Kidney (tissue), 22 donors: ENCODE measurements at regions of chr17 and their contacts with region 1.

Region 1: DNA sequence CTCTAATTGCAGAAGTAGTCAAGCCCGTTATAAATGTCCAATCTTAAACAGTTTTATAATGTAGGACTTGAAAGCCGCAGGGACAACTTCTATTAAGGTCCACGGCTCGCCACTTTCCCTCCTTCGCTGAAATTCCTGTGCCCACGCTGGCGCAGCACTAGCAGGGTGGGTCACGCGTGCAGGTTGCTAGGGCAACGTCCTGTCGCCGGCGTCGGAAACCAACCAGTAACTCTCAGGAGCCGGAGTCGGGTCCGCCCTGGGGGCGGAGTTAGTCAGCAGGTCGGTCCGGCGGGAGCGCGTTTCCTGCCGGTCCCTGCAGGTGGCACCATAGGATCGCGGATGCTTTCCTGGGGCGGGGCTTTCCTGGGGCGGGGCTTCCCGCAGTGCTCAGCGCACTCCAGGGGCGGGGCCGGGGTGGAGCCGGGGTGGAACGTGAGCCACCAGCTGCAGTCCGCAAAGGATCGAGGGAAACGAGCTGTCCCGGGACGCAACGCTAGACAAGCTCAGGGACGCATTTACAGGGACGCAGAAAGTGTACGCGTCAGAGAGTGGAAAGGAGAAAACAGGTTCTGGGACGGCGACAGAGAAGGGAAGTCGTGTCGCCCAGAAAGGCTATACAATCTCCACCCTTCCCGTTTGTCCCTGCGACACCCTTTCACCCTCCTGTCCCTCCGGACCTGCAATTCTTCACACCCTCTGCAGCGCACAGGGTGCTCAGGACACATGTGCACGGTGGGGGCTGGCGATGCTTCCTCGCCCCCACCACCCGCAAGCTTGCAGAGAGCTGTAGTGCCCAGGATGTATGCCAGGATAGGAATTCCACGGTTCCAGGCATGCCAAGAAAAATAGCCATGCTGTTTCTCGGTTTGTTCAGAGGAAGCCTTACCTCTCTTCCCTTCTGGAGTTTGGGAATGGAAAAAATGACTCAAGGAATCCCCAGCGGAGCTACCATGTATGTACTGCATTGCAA is 12.4 kb downstream of the COPZ2 start:
- DNase-seq: peak; percentile 98 to 100 (median 99)
- H3K4me3 ChIP-seq: peak overlapping the region; percentile 66 to 96 (median 82)
- H3K27ac ChIP-seq: peak overlapping the region; percentile 41 to 77
- H3K4me1 ChIP-seq: peaks cover 4 to 24% (median 16%) of the 10 kb centered on the region in 3 donors
- H3K27me3 ChIP-seq: peaks cover 2% of the 10 kb centered on the region
- CTCF ChIP-seq: peak; percentile 96

Region 2: GRCh38 chr17:48131216-48131824 is 106.1 kb after region 1 on chr17:
- intact Hi-C with region 1: loop called (anchors 10 kb)
- DNase-seq: peak in 4 of 5 donors; percentile 71 to 92 (median 81)
- H3K4me3 ChIP-seq: no peak overlapping the region
- H3K27ac ChIP-seq: no peak overlapping the region
- H3K4me1 ChIP-seq: no peaks in the 10 kb centered on the region
- H3K27me3 ChIP-seq: no peaks in the 10 kb centered on the region
- CTCF ChIP-seq: peak; percentile 81

Region 3: DNA sequence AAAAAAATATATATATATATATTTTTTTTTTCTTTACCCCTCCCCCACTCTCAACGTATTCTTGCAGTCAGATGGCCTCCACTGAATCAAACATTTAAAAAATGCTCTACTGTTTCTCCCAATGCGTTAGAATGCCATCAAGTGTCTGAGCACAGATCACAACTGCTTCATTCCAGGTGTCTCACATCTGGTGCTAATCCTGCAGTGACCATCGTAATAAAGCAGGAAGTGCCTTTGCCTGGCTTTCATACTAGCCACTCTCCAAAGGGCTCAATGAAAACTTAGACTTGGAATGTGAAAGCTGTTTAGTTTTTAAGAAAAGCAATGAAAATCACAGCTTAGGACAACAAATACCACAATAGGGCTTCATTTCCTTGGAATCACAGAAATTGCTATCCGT is 367.6 kb after region 1 on chr17:
- intact Hi-C with region 1: no loop called
- DNase-seq: peak in 3 of 5 donors; percentile 13 to 65 (median 24)
- H3K4me3 ChIP-seq: no peak overlapping the region
- H3K27ac ChIP-seq: no peak overlapping the region
- H3K4me1 ChIP-seq: no peaks in the 10 kb centered on the region
- H3K27me3 ChIP-seq: no peaks in the 10 kb centered on the region
- CTCF ChIP-seq: no peak